ENCODE measurements at regions of chr14 and their contacts with region 1.

Region 1: DNA sequence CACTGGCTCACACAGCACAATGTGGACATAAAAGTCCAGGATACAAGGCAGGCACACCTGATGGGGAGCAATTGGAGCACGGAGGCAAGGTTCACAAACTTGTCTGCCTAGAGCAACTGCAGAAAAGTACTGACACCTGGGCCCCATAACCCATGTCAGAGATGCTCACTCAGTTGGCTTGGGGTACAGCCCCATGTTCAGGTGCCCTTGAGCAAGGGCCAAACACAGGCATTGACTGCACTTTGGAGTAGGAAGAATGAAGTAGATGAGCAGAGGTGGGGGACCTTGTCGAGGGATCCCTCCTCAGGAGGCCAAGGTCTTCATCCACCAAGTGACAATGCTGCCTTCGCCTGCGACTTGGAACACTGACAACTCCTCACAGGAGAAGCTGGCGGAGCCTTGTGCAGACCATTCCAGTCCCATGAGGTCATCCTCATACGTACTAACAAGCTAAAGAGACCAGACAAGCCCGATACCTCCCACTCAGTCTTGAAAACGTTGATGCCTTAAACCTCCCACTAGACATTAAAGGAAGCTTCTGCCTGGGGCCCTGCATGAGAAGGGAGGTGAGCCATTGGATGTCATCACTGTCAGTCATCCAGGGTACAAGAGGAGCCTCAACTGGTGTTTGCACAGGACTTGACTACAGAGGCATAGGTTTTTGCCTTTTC is 42.5 kb upstream of the C14orf180 start:
- ATAC-seq: peak in 1 of 8 experiments; percentile 51
- H3K4me3 ChIP-seq: no peak overlapping the region
- H3K27ac ChIP-seq: no peak overlapping the region
- H3K4me1 ChIP-seq: no peaks in the 10 kb centered on the region

Region 2: DNA sequence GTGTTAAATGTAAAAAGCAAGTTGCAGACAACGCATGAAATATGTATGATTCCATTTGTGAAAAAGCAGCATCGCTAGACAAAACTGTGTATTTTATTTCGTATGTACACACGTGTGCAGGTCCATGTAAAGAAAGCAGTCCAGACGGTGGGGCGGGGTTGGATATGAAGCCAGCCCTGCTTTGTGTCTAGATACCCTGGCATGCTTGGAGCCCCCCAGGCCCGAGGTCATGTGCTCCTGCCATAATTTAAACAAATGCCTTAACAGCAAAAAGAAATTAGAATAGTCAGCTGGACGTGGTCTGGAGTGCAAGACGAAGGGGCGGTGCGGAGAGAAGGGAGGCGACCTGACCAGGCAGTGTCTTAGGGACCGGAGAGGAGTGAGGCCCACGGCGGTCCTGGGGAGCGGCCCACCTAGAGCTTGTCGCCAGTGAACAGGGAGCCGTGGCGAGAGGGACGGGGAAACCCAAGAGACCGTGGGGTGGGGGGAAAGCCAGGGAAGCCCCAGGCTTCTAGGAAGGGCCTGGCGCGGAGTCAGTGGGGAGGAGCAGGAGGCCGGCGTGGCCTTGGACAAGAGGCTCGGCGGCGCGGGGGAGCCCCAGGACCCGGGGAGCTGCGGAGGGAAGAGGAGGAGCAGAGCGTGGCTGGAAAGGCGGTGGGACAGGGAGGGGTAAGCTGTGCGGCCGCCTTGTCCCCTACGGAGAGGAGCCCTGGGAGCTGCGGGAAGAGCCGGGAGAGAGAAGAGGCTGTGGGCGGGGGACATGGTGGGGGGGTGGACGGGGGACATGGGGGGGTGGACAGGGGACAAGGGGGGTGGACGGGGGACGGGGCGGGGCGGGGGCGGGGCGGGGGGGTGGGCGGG is 76.1 kb before region 1 on chr14:
- in situ Hi-C with region 1: loop called in 1 of 9 experiments (anchors 10 kb)
- ATAC-seq: peak in 6 of 8 experiments; percentile 28 to 82 (median 74)
- H3K4me3 ChIP-seq: peak overlapping the region in 1 of 5 donors; percentile 14
- H3K27ac ChIP-seq: peak overlapping the region; percentile 51 to 68
- H3K4me1 ChIP-seq: peaks cover 27 to 40% of the 10 kb centered on the region in 2 donors

Measured in motor neuron (in vitro differentiated cells).